MCF 10A (cell line): ENCODE measurements at regions of chr10 and their contacts with region 1.

Region 1: DNA sequence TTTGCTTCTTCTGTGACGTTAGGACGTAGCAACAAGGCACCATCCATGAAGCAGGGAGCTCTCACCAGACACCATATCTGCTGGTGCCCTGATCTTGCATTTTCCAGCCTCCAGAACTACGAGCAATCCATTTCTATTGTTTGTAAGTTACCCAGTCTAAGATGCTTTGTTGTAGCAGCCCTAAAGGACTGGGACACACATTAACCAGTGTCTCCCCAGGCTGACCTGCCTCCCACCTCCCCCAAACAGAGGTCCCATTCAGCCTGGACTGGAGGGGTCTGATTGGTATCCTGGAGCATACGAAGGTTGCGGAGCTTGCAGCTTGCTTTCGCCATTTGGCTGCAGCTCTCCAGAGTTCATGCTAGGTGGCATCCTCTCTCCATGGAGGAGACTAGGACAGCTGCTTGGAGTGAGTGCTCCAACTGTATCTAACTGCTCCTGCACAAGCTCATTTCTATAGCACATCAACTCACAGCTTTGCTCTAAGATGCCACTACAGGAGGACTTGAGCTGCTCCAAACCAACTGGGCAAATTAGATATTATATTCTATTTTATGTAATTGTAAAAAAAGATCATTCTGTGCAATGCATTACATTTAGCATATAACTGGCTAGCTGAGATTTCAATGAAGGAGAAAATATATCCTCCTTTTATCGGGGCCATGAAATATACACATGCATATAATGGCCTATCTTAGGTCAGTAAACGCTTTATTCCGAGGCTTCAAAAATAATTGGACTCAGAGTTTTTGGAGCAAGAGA is 8.0 kb upstream of the GRK5 start:
- DNase-seq: peak; percentile 73
- H3K4me3 Mint-ChIP-seq: no peak overlapping the region
- H3K27ac Mint-ChIP-seq: no peak overlapping the region
- H3K4me1 Mint-ChIP-seq: peaks cover 16% of the 10 kb centered on the region
- H3K27me3 Mint-ChIP-seq: no peaks in the 10 kb centered on the region
- CTCF ChIP-seq: peak; percentile 59

Region 2: DNA sequence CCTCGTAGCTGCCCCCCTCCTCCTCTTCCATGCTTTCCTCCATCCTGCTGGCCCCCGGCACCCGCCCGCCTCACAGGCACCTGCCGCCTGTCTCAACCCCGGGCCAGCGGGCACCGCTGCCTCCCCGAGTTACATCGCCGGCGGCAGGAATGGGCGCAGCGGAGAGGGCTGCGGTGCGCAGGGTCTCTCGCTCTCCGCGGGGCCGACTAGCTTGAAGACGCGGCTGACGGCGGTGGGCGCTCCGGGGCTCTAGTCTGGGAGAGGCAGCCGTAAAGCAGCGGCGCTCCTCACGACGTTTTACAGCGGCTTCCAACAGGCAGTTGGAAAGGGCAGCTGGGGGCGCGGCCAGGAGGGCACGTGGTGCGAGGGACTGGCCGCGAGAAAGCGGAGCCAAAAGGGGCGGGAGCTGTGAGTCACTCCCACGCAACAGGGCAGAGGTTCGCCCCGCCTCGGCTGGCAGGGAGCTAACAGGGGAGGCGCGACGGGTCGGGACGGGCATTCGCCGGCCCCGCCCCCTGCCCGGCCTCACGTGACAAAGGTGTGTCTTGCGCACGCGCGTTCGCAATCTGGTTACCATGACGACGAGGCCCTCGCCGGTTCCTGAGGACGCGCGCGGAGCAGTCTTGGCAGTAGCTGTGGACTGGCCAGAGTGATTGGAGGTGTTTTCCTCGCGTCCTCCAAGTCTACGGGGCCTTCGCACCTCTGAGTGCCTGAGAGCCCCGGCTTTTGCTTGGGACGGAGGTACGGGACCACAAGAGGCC is 444.5 kb before region 1 on chr10 and contains the start of gene CACUL1:
- CTCF ChIA-PET with region 1: no interaction called
- POLR2A ChIA-PET with region 1: no interaction called
- intact Hi-C with region 1: no loop called
- DNase-seq: peak; percentile 99
- H3K4me3 Mint-ChIP-seq: peak within 1 kb of the TSS; percentile 93
- H3K27ac Mint-ChIP-seq: peak within 1 kb of the TSS; percentile 95
- H3K4me1 Mint-ChIP-seq: peaks cover 19% of the 10 kb centered on the region
- H3K27me3 Mint-ChIP-seq: no peaks in the 10 kb centered on the region
- CTCF ChIP-seq: no peak
- total RNA-seq, gene CACUL1: 45.9 and 51.0 TPM in 2 replicates

Region 3: GRCh38 chr10:118768071-118768919 is 431.1 kb before region 1 on chr10:
- CTCF ChIA-PET with region 1: no interaction called
- POLR2A ChIA-PET with region 1: no interaction called
- intact Hi-C with region 1: no loop called
- DNase-seq: no peak
- H3K4me3 Mint-ChIP-seq: no peak overlapping the region
- H3K27ac Mint-ChIP-seq: no peak overlapping the region
- H3K4me1 Mint-ChIP-seq: no peaks in the 10 kb centered on the region
- H3K27me3 Mint-ChIP-seq: no peaks in the 10 kb centered on the region
- CTCF ChIP-seq: no peak

Region 4: DNA sequence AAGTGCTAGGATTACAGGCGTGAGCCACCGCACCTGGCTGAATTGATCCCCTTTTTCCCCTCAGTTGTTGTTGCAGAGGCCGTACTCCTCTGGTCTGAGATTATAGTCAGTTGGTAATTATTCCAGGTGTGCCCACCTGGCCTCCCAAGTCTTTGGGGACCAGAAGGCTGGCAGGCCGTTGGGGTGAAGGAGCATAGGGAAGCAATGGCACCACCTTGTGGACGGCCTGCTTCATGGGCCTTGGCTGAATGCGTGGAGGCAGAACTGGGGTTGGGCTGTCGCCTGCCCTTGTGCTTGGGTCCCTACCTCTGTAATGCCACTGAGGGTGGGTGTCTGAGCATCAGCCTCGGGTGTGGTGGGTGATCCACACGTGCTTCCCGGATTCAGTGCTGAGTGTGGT is 217.4 kb after region 1 on chr10:
- CTCF ChIA-PET with region 1: interaction called, 116 read pairs
- POLR2A ChIA-PET with region 1: no interaction called
- intact Hi-C with region 1: loop called (anchors 1 kb)
- DNase-seq: peak; percentile 75
- H3K4me3 Mint-ChIP-seq: no peak overlapping the region
- H3K27ac Mint-ChIP-seq: no peak overlapping the region
- H3K4me1 Mint-ChIP-seq: no peaks in the 10 kb centered on the region
- H3K27me3 Mint-ChIP-seq: no peaks in the 10 kb centered on the region
- CTCF ChIP-seq: peak; percentile 76

Region 5: DNA sequence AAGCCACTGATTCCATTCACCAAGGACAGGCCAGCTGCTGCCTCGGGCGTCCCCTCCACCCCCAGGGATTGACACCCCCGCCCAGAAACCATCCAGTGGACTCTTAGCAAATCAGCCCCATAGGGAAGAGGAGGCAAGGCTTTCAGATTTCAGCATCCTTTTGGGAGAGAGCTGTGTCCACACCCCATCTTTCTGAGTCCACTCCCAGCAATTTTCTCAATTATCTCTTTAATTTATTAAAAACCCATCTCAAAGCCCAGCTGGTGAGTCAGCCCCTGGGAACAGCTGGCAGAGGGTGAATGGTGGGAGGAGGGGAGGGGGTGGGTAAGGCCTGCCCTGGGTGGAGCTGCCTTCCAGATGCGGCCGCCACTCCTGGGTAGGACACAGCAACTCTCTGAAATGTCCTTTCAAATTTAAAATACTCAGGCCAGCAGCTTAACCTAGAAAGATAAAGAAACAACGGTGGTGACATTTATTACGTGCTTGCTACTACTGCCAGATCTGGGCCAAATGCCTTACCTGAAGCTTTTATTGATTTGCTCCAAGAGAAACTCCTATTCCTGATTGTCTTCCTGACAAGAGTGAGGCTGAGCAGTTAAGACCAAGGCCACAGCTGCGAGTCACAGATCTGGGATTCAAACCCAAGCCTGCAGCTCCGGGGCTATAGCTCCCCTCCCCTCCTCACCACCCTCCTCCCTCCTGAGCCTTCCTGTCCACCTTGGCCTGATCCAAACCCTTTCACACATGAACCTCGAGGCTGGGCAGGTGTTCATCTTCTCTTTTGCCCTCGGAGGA is 222.7 kb after region 1 on chr10:
- CTCF ChIA-PET with region 1: interaction called, 116 read pairs
- POLR2A ChIA-PET with region 1: interaction called, 4 read pairs
- intact Hi-C with region 1: loop called (anchors 1 kb)
- DNase-seq: no peak
- H3K4me3 Mint-ChIP-seq: no peak overlapping the region
- H3K27ac Mint-ChIP-seq: no peak overlapping the region
- H3K4me1 Mint-ChIP-seq: no peaks in the 10 kb centered on the region
- H3K27me3 Mint-ChIP-seq: no peaks in the 10 kb centered on the region
- CTCF ChIP-seq: no peak